Mammary epithelial cell (primary cell): ENCODE measurements at regions of chr1 and their contacts with region 1.

Region 1: DNA sequence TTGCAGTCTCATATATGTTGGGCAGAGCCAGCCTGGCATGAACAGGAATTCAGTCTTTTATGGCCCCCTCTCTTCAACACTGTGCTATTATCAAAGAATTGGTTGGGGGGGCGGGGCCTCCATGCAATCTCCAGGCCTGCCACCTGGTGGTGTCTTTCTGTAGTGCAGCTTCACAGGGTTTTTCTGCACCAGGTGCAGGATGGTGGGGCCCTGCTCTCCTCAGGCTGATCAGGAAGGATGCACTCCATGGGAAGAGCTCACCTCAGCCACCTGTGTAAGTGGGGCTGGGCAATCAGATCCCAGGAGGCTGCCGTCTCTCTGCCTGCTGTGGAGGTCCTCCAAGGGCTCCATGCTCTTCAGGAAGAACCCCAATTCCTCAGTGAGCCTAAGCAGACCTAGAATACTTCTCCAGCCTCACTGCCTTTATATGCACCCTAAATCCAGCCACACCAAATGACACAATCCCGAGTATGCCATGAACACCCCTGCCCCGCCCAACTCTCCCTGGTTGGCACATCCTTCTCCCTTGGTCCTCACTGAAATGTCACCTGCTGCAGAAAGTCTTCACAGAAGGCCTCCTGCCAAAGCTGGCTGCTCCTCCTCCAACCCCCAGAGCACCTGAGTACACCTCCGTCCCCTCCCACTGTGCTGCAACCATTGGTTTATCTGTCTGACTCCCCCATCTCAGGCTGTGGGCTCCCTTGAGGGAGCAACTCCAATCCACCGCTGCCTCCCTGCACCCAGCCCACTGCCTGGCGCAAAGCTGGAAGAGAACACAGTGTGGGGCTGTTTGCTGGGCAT is 16.5 kb downstream of the STK40 start:
- DNase-seq: peak; percentile 50
- H3K4me3 ChIP-seq: no peak overlapping the region
- H3K27ac ChIP-seq: no peak overlapping the region
- H3K4me1 ChIP-seq: peaks cover 24% of the 10 kb centered on the region
- H3K27me3 ChIP-seq: no peaks in the 10 kb centered on the region
- CTCF ChIP-seq: peak; percentile 85 to 90

Region 2: DNA sequence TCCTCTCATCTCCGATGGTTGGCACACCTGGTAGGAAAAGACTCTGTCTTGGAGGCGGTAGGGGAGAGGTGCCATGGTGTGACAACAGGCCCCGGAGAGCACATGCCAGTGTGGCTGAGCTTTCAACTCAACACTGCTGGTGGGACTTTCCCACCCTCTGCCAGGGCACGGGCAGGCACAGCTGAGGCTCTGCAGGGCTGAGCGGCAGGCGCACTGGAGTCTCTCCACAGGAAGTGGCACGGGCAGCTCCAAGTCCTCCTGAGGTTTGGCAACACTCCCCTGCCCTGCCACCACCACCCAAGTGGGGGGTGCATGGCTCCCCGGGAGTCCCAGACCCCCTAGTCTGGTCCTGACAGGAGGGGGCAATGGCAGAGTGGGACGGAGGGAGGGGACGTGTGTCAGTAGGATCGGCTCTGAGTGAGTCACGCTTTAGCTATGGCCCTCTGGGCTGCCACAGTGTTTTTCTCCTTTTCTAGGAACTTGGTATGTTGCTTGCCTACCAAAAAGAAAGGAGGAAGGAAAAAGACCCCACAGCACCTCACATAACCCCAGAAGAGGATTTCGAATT is 18.5 kb before region 1 on chr1:
- CTCF ChIA-PET with region 1: no interaction called
- dilution Hi-C with region 1: no loop called
- in situ Hi-C with region 1: no loop called
- intact Hi-C with region 1: loop called (anchors 2 kb)
- DNase-seq: peak; percentile 74
- H3K4me3 ChIP-seq: no peak overlapping the region
- H3K27ac ChIP-seq: peak overlapping the region; percentile 87
- H3K4me1 ChIP-seq: peaks cover 52% of the 10 kb centered on the region
- H3K27me3 ChIP-seq: no peaks in the 10 kb centered on the region
- CTCF ChIP-seq: no peak

Region 3: GRCh38 chr1:36411674-36412520 is 42.6 kb after region 1 on chr1:
- CTCF ChIA-PET with region 1: no interaction called
- dilution Hi-C with region 1: no loop called
- in situ Hi-C with region 1: no loop called
- intact Hi-C with region 1: no loop called
- DNase-seq: peak; percentile 51
- H3K4me3 ChIP-seq: no peak overlapping the region
- H3K27ac ChIP-seq: no peak overlapping the region
- H3K4me1 ChIP-seq: peaks cover 8% of the 10 kb centered on the region
- H3K27me3 ChIP-seq: no peaks in the 10 kb centered on the region
- CTCF ChIP-seq: peak in 1 of 2 donors; percentile 2

Region 4: GRCh38 chr1:36432616-36433015 is 63.4 kb after region 1 on chr1:
- CTCF ChIA-PET with region 1: no interaction called
- dilution Hi-C with region 1: no loop called
- in situ Hi-C with region 1: no loop called
- intact Hi-C with region 1: no loop called
- DNase-seq: no peak
- H3K4me3 ChIP-seq: no peak overlapping the region
- H3K27ac ChIP-seq: no peak overlapping the region
- H3K4me1 ChIP-seq: peaks cover 14% of the 10 kb centered on the region
- H3K27me3 ChIP-seq: no peaks in the 10 kb centered on the region
- CTCF ChIP-seq: no peak

Region 5: GRCh38 chr1:36731226-36732014 is 362.2 kb after region 1 on chr1:
- CTCF ChIA-PET with region 1: no interaction called
- dilution Hi-C with region 1: no loop called
- in situ Hi-C with region 1: no loop called
- intact Hi-C with region 1: no loop called
- DNase-seq: no peak
- H3K4me3 ChIP-seq: no peak overlapping the region
- H3K27ac ChIP-seq: no peak overlapping the region
- H3K4me1 ChIP-seq: no peaks in the 10 kb centered on the region
- H3K27me3 ChIP-seq: no peaks in the 10 kb centered on the region
- CTCF ChIP-seq: no peak